Psoas muscle (tissue), 8 donors: ENCODE measurements at regions of chr7 and their contacts with region 1.

Region 1: DNA sequence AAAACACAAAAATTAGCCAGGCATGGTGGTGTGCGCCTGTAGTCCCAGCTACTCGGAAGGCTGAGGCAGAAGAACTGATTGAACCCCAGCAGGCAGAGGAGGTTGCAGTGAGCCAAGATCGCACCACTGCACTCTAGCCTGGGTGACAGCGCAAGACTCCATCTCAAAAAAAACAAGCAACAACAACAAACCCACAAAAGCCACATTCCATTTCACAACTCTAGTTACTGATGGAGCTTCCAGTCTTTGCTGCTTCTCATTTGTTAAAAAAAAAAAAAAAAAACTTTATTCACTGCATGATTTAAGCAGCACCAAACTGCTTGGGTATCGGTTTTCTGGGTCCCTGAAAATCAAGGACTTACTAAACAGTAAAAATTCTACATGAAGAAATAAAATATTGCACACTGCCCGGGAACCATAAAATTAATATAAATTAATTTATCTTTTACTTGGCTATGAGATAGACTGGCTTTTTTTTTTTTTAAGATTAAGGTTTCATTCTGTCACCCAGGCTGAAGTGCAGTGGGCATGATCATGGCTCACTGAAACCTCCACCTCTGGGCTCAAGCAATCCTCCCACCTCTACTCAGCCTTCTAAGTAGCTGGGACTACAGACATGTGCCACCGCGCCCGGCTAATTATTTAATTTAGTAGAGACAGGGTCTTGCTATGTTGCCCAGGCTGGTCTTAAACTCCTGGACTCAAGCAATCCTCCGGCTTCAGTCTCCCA is 42.0 kb downstream of the SRPK2 start:
- DNase-seq: no peak
- ATAC-seq: no peak
- H3K4me3 ChIP-seq: no peak overlapping the region
- H3K27ac ChIP-seq: no peak overlapping the region
- H3K4me1 ChIP-seq: peaks cover 28% of the 10 kb centered on the region
- H3K27me3 ChIP-seq: no peaks in the 10 kb centered on the region
- CTCF ChIP-seq: no peak

Region 2: GRCh38 chr7:105269397-105269796 is 77.4 kb before region 1 on chr7:
- intact Hi-C with region 1: no loop called
- DNase-seq: no peak
- ATAC-seq: peak; percentile 25 to 56 (median 37)
- H3K4me3 ChIP-seq: peak overlapping the region; percentile 73
- H3K27ac ChIP-seq: peak overlapping the region; percentile 90
- H3K4me1 ChIP-seq: peaks cover 24% of the 10 kb centered on the region
- H3K27me3 ChIP-seq: no peaks in the 10 kb centered on the region
- CTCF ChIP-seq: no peak

Region 3: DNA sequence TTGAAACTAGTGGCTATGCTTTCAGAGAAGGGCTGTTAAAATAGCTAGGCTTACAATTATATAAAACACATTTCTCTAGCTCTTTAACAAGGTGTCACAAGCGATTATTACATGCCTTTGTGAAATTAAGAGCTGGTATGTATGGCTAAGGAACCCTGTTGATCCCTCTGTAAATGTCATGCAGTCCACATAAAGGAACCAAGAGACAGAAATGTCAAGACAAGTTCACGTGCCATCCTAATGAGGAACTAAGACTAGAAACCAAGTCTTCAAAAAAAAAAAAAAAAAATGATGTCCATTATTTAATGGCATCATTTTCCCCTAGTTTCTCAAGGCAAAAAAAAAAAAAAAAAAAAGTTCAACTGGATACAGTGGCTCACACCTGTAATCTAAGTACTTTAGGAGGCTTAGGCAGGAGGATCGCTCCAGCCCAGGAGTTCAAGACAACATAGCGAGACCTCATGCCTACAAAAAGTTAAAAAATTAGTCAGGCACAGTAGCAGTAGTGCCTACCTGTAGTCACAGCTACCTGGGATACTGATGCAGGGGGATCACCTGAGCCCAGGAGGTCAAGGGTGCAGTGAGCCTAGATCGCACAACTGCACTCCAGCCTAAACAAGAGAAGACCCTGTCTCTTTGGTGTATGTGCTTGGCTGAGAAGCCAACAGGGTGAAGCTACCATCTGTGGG is 21.4 kb before region 1 on chr7:
- intact Hi-C with region 1: loop called in 1 of 2 experiments (anchors 1 kb)
- DNase-seq: no peak
- ATAC-seq: no peak
- H3K4me3 ChIP-seq: no peak overlapping the region
- H3K27ac ChIP-seq: no peak overlapping the region
- H3K4me1 ChIP-seq: peaks cover 4% of the 10 kb centered on the region
- H3K27me3 ChIP-seq: no peaks in the 10 kb centered on the region
- CTCF ChIP-seq: no peak

Region 4: GRCh38 chr7:105611856-105612775 is 265.4 kb after region 1 on chr7:
- intact Hi-C with region 1: no loop called
- DNase-seq: no peak
- ATAC-seq: no peak
- H3K4me3 ChIP-seq: no peak overlapping the region
- H3K27ac ChIP-seq: no peak overlapping the region
- H3K4me1 ChIP-seq: no peaks in the 10 kb centered on the region
- H3K27me3 ChIP-seq: no peaks in the 10 kb centered on the region
- CTCF ChIP-seq: no peak